Spleen (tissue), 13 donors: ENCODE measurements at regions of chr6 and their contacts with region 1.

Region 1: DNA sequence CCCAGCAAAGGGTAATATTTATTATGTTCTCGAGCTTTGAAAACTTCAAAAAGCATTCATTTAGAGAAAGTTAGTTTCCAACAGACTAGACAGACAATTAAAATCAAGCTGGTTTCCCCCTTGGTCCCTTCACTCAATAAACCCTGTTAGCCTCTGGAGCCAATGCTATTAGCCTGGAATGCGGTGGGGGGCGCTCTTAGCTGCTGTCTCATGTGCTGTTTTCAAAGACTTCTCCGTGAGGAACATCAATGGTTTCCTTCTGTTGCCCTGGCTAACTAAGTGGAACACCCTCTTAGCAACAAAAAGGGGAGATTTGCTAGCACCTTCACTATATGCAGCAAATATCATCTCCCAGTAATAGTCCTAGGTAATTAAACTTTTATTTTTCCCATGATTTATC is 86.4 kb downstream of the LY86 start:
- DNase-seq: no peak
- H3K4me3 ChIP-seq: no peak overlapping the region
- H3K27ac ChIP-seq: no peak overlapping the region
- H3K4me1 ChIP-seq: peaks cover 5 to 36% (median 17%) of the 10 kb centered on the region in 6 donors
- H3K27me3 ChIP-seq: no peaks in the 10 kb centered on the region
- CTCF ChIP-seq: no peak
- POLR2A ChIP-seq: no peak

Region 2: GRCh38 chr6:7243179-7243981 is 568.5 kb after region 1 on chr6:
- intact Hi-C with region 1: loop called (anchors 5 kb)
- DNase-seq: no peak
- H3K4me3 ChIP-seq: no peak overlapping the region
- H3K27ac ChIP-seq: peak overlapping the region; percentile 4 to 74 (median 62)
- H3K4me1 ChIP-seq: peaks cover 12 to 47% (median 35%) of the 10 kb centered on the region in 6 donors
- H3K27me3 ChIP-seq: no peaks in the 10 kb centered on the region
- CTCF ChIP-seq: peak; percentile 73 to 93 (median 88)
- POLR2A ChIP-seq: no peak